MCF 10A (cell line): ENCODE measurements at regions of chr1 and their contacts with region 1.

Region 1: DNA sequence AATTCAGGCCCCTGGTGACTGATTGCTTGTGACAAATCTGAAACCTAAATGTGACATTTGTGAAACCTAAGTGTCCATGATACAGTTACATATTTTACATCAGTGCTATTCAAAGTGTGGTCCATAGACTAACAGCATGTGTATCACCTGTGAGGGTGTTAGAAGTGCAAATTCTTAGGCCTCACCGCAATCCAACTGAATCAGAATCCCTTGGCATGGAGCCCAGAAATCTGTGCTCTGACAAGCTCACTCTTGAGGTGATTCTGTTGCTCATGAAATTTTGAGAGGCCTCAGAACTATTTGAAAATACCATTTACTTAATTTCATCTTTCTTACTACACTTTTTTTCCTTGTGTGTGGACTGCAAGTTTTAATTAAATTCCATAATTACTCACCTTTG is 587.9 kb downstream of the ADGRL2 start:
- DNase-seq: peak; percentile 97
- H3K4me3 Mint-ChIP-seq: no peak overlapping the region
- H3K27ac Mint-ChIP-seq: peak overlapping the region; percentile 35
- H3K4me1 Mint-ChIP-seq: peaks cover 36% of the 10 kb centered on the region
- H3K27me3 Mint-ChIP-seq: no peaks in the 10 kb centered on the region
- CTCF ChIP-seq: no peak

Region 2: GRCh38 chr1:81800695-81801650 is 587.7 kb before region 1 on chr1 and contains the start of gene ADGRL2:
- CTCF ChIA-PET with region 1: interaction called, 3 read pairs
- POLR2A ChIA-PET with region 1: interaction called, 5 read pairs
- intact Hi-C with region 1: loop called (anchors 5 kb)
- DNase-seq: peak; percentile 93
- H3K4me3 Mint-ChIP-seq: peak within 1 kb of the TSS; percentile 98
- H3K27ac Mint-ChIP-seq: peak within 1 kb of the TSS; percentile 69
- H3K4me1 Mint-ChIP-seq: peaks cover 7% of the 10 kb centered on the region
- H3K27me3 Mint-ChIP-seq: peaks cover 33% of the 10 kb centered on the region
- CTCF ChIP-seq: no peak
- total RNA-seq, gene ADGRL2: 3.0 and 3.4 TPM in 2 replicates

Region 3: GRCh38 chr1:82377201-82377884 is 11.3 kb before region 1 on chr1:
- CTCF ChIA-PET with region 1: interaction called, 17 read pairs
- POLR2A ChIA-PET with region 1: interaction called, 10 read pairs
- intact Hi-C with region 1: no loop called
- DNase-seq: peak; percentile 83
- H3K4me3 Mint-ChIP-seq: no peak overlapping the region
- H3K27ac Mint-ChIP-seq: peak overlapping the region; percentile 80
- H3K4me1 Mint-ChIP-seq: peaks cover 19% of the 10 kb centered on the region
- H3K27me3 Mint-ChIP-seq: no peaks in the 10 kb centered on the region
- CTCF ChIP-seq: no peak

Region 4: DNA sequence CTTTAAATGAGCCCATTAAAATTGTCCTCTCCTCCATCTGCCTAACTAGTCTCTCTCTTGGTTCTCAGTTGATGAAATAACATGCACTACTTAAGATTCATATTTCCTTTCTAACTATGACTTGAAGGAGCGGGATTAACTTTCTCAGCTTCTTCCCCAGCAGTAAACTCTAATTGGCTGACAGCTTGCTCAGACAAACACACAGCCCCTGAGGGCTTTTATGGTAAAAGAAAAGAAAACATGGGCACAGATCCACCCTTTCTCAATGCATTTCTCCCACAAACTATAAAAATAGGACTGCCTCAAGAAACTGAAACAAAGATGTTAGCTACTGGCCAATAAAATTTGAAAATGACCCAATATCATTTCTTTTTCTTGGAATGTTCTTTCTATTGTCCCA is 115.1 kb after region 1 on chr1:
- CTCF ChIA-PET with region 1: no interaction called
- POLR2A ChIA-PET with region 1: no interaction called
- intact Hi-C with region 1: no loop called
- DNase-seq: peak; percentile 74
- H3K4me3 Mint-ChIP-seq: peak overlapping the region; percentile 3
- H3K27ac Mint-ChIP-seq: no peak overlapping the region
- H3K4me1 Mint-ChIP-seq: peaks cover 17% of the 10 kb centered on the region
- H3K27me3 Mint-ChIP-seq: no peaks in the 10 kb centered on the region
- CTCF ChIP-seq: no peak

Region 5: GRCh38 chr1:82565146-82565545 is 176.5 kb after region 1 on chr1:
- CTCF ChIA-PET with region 1: no interaction called
- POLR2A ChIA-PET with region 1: interaction called, 3 read pairs
- intact Hi-C with region 1: loop called (anchors 10 kb)
- DNase-seq: peak; percentile 80
- H3K4me3 Mint-ChIP-seq: peak overlapping the region; percentile 49
- H3K27ac Mint-ChIP-seq: peak overlapping the region; percentile 79
- H3K4me1 Mint-ChIP-seq: peaks cover 26% of the 10 kb centered on the region
- H3K27me3 Mint-ChIP-seq: no peaks in the 10 kb centered on the region
- CTCF ChIP-seq: no peak